BJ (cell line): ENCODE measurements at regions of chr11 and their contacts with region 1.

Region 1: GRCh38 chr11:75445315-75445953 is 12.4 kb upstream of the KLHL35 start:
- DNase-seq: no peak
- H3K4me3 ChIP-seq: no peak overlapping the region
- H3K27me3 ChIP-seq: no peaks in the 10 kb centered on the region; the same call in 1 of the 2 replicates
- CTCF ChIP-seq: peak; percentile 93

Region 2: GRCh38 chr11:75406338-75406777 is 39.1 kb before region 1 on chr11:
- CTCF ChIA-PET with region 1: interaction called, 13 read pairs
- POLR2A ChIA-PET with region 1: no interaction called
- DNase-seq: no peak
- H3K4me3 ChIP-seq: no peak overlapping the region
- H3K27me3 ChIP-seq: no peaks in the 10 kb centered on the region
- CTCF ChIP-seq: no peak

Region 3: DNA sequence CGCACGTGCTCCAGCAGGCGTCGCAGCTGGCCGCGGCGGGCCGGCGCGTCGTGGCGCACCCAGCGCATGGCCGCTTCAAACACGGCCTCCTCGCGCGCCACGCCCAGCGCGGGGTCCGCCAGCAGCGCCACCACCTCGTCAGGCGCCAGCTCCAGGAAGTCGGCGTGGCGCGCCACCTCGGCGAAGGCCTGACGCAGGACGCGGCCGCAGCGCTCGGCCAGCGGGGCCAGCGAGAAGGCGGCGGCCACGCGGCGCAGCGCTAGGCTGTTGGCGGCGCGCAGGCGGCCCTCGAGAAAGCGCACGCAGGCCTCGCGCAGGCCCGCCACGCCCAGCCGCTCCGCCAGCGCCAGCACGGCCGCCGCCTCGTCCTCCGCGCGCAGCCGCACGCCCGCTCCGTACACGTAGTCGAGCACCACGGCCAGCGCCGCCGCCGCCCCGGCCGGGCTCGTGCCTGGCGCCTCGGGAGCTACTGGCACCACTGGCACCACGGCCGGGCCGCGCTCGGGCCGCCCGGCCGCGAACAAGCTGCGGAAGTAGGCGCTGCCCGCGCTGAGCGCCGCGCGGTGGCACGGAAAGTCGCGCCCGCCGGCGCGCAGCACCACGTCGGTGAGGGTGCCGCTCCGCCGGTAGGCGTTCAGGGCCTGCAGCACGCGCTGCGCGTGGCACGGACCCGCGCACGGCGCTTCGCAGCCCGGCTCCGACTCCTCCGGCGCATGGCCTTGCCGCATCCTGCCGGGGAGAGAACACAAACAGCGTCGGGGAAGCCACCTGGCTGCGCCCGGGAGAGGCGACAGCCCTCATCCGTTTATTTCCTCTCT is 15.3 kb before region 1 on chr11:
- CTCF ChIA-PET with region 1: interaction called, 27 read pairs
- POLR2A ChIA-PET with region 1: no interaction called
- DNase-seq: no peak
- H3K4me3 ChIP-seq: peak overlapping the region; percentile 27
- H3K27me3 ChIP-seq: peaks cover 26% of the 10 kb centered on the region
- CTCF ChIP-seq: no peak

Region 4: DNA sequence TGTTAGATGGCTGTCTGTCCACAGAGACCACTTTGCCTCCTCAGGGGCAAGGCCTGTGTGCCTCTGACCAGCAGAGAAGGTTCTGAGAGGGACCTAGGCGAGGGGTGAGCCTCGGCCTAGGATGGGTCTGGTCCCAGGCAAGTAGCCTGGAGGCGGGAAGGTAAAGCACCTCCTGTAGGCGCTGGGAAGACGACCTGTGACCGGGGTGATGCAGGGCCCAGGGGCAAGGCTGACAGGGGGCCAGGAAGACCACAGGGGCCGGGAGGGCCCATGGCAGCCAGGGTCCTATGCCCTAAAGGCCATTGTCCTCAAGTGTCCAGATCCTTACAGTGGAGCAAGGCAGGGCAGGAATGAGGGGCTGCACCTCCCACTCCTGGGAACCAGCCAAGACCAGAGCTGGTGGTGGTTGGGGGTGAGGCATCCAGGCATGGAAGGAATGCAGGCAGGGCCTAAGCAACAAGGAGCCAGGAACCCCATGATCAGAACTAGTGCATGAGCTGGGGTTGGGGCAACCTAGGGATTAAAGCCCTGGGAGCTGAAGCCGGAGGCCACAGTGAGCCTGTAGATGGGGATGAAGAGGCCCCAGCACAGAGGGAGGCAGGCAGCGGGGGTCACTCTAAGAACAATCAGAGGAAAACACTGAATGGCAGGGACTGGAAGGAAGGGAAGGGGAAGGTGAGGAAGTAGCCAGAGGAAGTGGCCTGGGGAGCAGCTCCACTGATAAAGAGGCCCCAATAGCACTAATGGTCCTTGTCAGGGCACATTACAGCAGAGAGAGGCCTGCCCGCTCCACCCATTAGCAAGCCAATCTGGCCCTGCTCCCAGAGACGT is 20.5 kb after region 1 on chr11:
- CTCF ChIA-PET with region 1: interaction called, 14 read pairs
- POLR2A ChIA-PET with region 1: no interaction called
- DNase-seq: no peak
- H3K4me3 ChIP-seq: no peak overlapping the region
- H3K27me3 ChIP-seq: no peaks in the 10 kb centered on the region
- CTCF ChIP-seq: peak; percentile 9; the same call in 1 of the 2 replicates

Region 5: GRCh38 chr11:75499449-75500190 is 54.2 kb after region 1 on chr11:
- CTCF ChIA-PET with region 1: interaction called, 11 read pairs
- POLR2A ChIA-PET with region 1: no interaction called
- DNase-seq: peak; percentile 98
- H3K4me3 ChIP-seq: no peak overlapping the region
- H3K27me3 ChIP-seq: 0 out of 2 replicates have a peak, but pooled peaks cover 1% of the 10 kb centered on the region
- CTCF ChIP-seq: no peak

Region 6: DNA sequence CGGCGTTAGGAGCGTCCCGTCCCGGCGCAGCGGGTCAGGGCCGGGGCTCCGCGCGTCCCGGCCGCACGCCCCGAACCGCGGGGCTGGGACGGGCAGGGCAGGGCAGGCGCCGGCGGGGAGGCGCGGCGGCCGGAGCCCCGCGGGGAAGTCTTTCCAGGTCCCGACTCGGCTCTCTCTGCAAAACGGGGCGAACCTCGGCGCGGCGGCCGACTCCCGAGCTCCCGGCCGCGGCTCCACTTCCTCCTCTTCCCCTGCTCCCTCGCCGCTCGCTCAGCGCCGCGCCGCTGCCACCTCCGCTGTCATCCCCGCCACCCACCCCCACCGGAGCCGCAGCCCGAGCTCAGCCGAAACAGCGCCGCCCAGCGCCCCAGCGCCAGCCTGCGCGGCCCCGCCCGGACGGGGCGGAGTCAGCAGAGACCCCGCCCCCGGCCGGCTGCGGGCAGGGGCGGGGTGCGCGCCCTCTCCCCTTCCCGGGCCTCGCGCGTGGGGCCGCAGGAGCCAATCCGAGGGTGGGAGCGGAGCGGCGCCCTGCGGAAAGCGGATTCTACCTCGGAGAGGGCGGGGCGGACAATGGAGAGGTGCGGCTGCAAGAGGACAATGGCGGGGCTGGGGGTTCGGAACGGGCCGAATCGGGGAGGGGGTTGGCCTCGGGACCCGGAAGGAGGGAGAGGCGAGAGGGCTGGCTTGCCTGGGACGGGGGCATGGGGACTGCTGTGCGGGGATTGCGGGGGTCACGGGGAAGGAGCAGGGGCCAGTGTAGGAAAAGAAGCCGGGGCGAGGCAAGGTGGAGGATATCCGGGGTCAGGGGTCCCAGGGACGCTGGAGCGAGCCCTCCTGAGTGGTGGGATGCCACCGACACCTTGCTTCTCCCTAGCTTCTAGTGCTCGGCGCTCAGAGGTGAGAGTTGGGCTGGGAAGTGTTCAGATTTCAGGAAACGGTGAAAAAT is 80.4 kb after region 1 on chr11 and contains the start of gene GDPD5:
- CTCF ChIA-PET with region 1: interaction called, 168 read pairs
- POLR2A ChIA-PET with region 1: no interaction called
- DNase-seq: no peak
- H3K4me3 ChIP-seq: peak within 1 kb of the TSS; percentile 89
- H3K27me3 ChIP-seq: peaks cover 15% of the 10 kb centered on the region; the same call in 1 of the 2 replicates
- CTCF ChIP-seq: peak; percentile 27; the same call in 1 of the 2 replicates
- polyA plus RNA-seq, gene GDPD5: 5.0 and 7.7 TPM in 2 replicates

Region 7: DNA sequence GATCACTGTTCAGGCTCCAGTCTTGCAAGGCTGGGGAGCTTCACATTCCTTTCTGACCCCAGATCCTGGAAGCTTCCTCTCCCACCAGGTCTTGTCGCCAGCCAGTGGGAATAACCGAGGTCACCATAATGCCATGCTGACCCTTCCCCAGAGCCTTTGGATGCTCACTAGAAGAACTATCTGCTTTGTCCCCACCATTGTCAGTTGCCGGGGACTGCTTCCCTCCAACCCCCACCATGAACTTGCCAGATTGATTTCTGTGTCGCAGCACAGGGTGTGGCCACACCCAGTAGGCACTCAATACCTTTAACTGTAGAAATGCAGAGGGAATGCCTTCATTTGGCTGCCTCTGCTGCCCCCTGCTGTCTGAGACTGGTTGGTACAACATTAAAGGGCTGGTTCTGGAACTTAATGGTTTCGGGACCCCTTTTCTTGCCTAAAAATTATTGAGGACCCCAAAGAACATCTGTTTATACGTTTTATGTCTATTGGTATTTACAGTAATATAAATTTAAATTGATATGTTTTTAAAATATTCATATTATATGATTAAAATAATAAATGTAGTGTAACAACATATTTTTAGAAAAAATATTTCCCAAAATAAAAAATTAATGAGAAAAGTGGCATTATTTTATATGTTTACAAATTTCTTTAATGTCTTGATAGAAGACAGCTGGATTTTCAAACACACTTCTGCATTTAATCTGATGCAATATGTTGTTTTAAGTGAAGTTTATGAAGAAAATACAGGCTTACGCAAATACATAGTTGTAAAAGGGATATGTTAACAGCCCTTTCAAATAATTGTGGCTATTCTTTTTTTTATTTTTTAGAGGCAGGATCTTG is 87.0 kb after region 1 on chr11:
- CTCF ChIA-PET with region 1: interaction called, 168 read pairs
- POLR2A ChIA-PET with region 1: no interaction called
- DNase-seq: no peak
- H3K4me3 ChIP-seq: no peak overlapping the region
- H3K27me3 ChIP-seq: peaks cover 7% of the 10 kb centered on the region; the same call in 1 of the 2 replicates
- CTCF ChIP-seq: peak; percentile 79